PC-3 (cell line): ENCODE measurements at regions of chrX and their contacts with region 1.

Region 1: DNA sequence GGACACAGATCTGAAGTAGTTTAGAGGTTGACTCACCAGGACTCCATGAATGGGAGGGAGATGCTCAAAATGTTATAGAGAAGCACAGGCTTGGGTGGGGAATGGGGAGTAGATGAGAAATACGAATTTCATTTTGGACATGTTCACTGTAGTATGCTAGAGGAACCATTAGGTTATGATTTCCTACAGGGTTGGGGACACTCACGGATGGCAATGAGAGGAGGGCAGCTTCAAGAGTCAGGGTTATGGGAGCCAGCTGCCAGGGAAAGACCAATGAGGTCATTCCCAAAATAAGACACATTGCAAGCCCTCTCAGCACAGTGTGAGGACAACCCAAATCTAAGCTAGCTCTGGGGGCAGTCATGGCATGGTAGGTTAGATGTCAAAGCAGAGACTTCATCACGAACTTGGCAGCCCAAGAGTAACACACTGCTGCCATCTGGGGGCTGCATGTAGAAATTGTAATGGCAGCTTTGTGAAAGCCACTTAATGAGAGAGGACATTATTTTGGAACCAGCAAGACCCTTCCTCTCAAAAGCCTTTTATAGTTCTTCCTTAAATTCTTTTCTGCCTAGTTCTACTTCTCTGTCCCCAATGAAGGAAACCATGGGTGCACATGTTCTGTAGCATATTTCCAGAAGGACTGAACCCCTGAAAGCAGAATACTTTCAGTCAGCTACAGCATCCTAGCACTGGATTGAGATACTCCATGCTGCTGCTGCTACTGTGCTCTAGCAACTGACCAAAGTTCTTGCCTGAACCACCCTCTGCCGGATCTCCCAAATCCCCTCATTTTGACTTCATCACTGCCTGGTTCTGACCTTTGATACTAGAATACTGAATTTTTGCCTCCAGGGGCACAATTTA is 16.2 kb upstream of the ZCCHC12 start:
- DNase-seq: peak; percentile 68
- ATAC-seq: peak; percentile 63
- H3K4me3 ChIP-seq: no peak overlapping the region
- H3K27ac ChIP-seq: no peak overlapping the region
- H3K4me1 ChIP-seq: no peaks in the 10 kb centered on the region
- H3K27me3 ChIP-seq: no peaks in the 10 kb centered on the region
- CTCF ChIP-seq: peak; percentile 79

Region 2: GRCh38 chrX:118603981-118604380 is 203.4 kb before region 1 on chrX:
- CTCF ChIA-PET with region 1: no interaction called
- POLR2A ChIA-PET with region 1: no interaction called
- intact Hi-C with region 1: loop called (anchors 1 kb)
- DNase-seq: peak; percentile 73
- ATAC-seq: peak; percentile 71
- H3K4me3 ChIP-seq: no peak overlapping the region; the same call in 1 of the 2 replicates
- H3K27ac ChIP-seq: no peak overlapping the region
- H3K4me1 ChIP-seq: no peaks in the 10 kb centered on the region
- H3K27me3 ChIP-seq: no peaks in the 10 kb centered on the region
- CTCF ChIP-seq: peak; percentile 81

Region 3: DNA sequence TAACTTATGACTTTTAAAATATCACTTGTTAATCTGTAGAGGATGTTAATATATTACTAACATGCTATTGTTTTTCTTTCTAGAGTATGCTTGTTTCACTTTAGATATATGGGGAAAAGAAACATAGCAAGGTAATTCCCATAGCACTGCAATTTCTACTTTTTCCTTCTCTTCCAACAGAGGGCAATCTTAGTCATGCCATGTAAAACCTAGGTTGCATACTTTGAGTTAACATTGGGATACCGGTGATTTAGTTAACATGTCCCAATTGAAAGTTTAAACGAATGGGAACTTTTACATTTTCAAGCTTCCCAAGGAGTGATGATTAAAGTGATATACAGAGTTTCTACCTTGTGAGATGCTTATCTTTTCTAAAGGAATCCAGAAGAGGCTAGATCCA is 169.4 kb before region 1 on chrX:
- CTCF ChIA-PET with region 1: no interaction called
- POLR2A ChIA-PET with region 1: no interaction called
- intact Hi-C with region 1: loop called (anchors 1 kb)
- DNase-seq: peak; percentile 44
- ATAC-seq: peak; percentile 64
- H3K4me3 ChIP-seq: no peak overlapping the region
- H3K27ac ChIP-seq: no peak overlapping the region
- H3K4me1 ChIP-seq: no peaks in the 10 kb centered on the region
- H3K27me3 ChIP-seq: no peaks in the 10 kb centered on the region
- CTCF ChIP-seq: peak; percentile 66

Region 4: DNA sequence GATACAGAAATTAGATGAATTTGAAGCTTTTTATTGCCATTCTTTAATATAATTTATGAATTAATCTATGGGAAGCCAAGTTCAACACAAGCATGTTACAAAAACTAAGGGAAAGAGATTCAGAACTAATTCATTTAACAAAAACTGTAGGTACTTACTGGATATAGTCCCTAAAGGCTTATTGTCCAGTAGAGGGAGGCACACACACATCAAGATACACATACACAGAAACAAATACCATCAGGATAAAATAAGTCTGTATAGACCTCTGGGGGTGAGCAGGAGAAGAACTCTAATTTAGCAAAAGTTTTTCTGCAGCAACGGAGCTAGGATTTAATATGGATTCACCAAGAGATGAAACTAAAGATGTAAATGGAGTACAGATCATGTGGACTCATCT is 163.0 kb before region 1 on chrX:
- CTCF ChIA-PET with region 1: interaction called, 4 read pairs
- POLR2A ChIA-PET with region 1: no interaction called
- intact Hi-C with region 1: loop called (anchors 1 kb)
- DNase-seq: peak; percentile 60
- ATAC-seq: peak; percentile 97
- H3K4me3 ChIP-seq: no peak overlapping the region
- H3K27ac ChIP-seq: no peak overlapping the region
- H3K4me1 ChIP-seq: no peaks in the 10 kb centered on the region
- H3K27me3 ChIP-seq: no peaks in the 10 kb centered on the region
- CTCF ChIP-seq: peak; percentile 78

Region 5: DNA sequence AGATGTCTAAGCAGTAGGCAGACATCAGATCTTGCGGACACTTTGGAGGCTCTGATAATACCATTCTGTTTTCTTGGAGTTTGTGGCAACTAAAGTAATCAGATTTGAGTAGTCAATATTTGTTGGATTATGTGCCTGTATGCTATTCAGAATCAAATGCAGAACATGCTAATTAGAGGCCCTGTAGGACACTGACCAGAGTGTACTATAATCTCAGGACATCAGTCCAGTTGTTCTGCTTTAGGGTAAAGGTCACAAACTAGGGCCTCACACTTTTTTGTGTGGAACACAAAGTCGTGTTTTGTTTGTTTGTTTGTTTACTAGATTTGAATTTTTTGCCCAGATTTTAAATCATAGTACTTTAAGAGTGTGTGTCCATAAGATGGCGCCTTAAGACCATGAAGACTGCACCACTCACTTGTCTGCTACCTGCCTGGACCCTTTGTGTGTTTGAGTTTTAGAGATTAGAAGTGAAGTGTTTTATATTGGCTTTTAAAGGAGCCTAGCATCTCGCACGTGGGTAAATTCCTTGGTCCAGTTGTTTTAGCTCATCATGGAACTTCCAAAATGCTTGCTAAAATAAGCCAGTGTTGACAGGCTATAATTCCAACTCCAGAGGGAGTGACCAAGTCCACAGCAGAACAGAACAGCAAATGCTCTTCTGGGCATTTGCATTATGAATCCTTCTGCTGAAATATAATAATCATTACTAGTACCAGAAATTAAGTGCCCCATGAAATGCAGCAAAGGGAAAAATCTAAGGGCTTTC is 45.3 kb before region 1 on chrX:
- CTCF ChIA-PET with region 1: no interaction called
- POLR2A ChIA-PET with region 1: interaction called, 4 read pairs
- intact Hi-C with region 1: loop called (anchors 1 kb)
- DNase-seq: peak; percentile 7
- ATAC-seq: no peak
- H3K4me3 ChIP-seq: no peak overlapping the region
- H3K27ac ChIP-seq: no peak overlapping the region
- H3K4me1 ChIP-seq: no peaks in the 10 kb centered on the region
- H3K27me3 ChIP-seq: no peaks in the 10 kb centered on the region
- CTCF ChIP-seq: peak; percentile 60

Region 6: DNA sequence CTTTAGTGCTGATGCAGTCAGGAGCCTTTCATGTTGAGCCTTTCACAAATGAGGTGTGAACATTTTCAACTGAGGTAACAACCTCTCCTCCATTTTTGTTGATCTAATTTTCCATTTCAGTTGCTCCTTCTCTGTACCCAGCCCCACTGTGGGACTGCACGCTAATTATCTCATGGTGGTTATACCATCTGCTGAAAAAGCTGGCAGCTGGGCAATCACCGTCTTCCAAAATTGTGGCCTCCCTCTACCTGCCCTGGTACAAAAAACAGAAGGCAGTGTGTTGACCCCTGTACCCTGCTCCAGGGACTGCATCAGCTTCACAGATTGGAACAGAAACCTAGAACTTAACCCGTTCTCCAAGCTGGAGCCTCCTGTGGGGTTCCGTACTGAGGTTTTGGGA is 94.6 kb after region 1 on chrX:
- CTCF ChIA-PET with region 1: no interaction called
- POLR2A ChIA-PET with region 1: no interaction called
- intact Hi-C with region 1: no loop called
- DNase-seq: no peak
- ATAC-seq: no peak
- H3K4me3 ChIP-seq: no peak overlapping the region
- H3K27ac ChIP-seq: no peak overlapping the region
- H3K4me1 ChIP-seq: no peaks in the 10 kb centered on the region
- H3K27me3 ChIP-seq: no peaks in the 10 kb centered on the region
- CTCF ChIP-seq: no peak

Region 7: GRCh38 chrX:118983513-118983912 is 176.1 kb after region 1 on chrX:
- CTCF ChIA-PET with region 1: no interaction called
- POLR2A ChIA-PET with region 1: no interaction called
- intact Hi-C with region 1: no loop called
- DNase-seq: no peak
- ATAC-seq: no peak
- H3K4me3 ChIP-seq: no peak overlapping the region
- H3K27ac ChIP-seq: no peak overlapping the region
- H3K4me1 ChIP-seq: no peaks in the 10 kb centered on the region
- H3K27me3 ChIP-seq: no peaks in the 10 kb centered on the region
- CTCF ChIP-seq: no peak